H1 (cell line): ENCODE measurements at regions of chr5 and their contacts with region 1.

Region 1: GRCh38 chr5:15821506-15821905 is 321.5 kb downstream of the FBXL7 start:
- DNase-seq: no peak
- H3K4me3 ChIP-seq: no peak overlapping the region
- H3K27ac ChIP-seq: no peak overlapping the region
- H3K4me1 ChIP-seq: no peaks in the 10 kb centered on the region
- H3K27me3 ChIP-seq: no peaks in the 10 kb centered on the region
- CTCF ChIP-seq: no peak
- EP300 ChIP-seq: no peak
- POLR2A ChIP-seq: no peak
- RAD21 ChIP-seq: no peak

Region 2: GRCh38 chr5:15406478-15406877 is 415.0 kb before region 1 on chr5:
- CTCF ChIA-PET with region 1: no interaction called
- POLR2A ChIA-PET with region 1: no interaction called
- DNase-seq: no peak
- H3K4me3 ChIP-seq: no peak overlapping the region
- H3K27ac ChIP-seq: no peak overlapping the region
- H3K4me1 ChIP-seq: no peaks in the 10 kb centered on the region
- H3K27me3 ChIP-seq: no peaks in the 10 kb centered on the region
- CTCF ChIP-seq: no peak
- EP300 ChIP-seq: no peak
- POLR2A ChIP-seq: no peak
- RAD21 ChIP-seq: no peak

Region 3: DNA sequence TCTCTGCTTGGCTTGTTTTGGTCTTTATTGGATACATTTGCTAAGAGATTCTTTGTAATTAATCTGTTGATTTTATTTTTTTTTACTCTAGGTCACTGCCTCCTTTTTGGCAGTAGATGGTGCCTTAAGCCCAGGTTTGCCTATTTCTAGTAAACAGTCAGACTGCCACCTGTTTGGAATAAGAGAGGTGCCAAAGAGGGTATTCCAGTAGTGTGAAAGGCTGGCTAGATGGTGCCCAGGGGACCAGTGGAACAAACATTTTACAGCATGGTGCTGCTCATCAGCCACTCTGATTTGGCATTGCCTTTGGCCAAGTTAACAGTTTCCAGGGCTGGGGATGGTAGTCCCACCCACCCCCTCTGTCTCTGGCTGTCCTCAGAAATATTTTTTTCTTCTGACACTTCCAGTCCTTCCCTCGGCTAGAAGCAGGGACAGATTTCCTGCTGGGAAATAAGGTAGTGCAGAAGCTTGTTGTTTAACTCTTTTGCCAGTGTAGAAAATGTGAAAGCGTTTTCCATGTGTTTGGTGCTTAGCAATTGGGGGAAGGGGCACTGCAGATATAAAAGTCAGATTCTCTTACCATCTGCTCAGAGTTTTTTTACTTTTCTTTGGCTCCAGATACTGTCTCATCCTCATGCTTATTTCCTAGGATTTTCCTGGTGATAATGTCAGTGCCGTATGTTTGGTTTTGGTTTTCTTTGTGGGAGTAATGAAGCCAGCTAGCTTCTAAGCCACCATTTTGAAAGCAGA is 358.1 kb before region 1 on chr5:
- CTCF ChIA-PET with region 1: interaction called, 14 read pairs
- POLR2A ChIA-PET with region 1: no interaction called
- DNase-seq: peak in 1 of 2 experiments; percentile 52
- H3K4me3 ChIP-seq: no peak overlapping the region
- H3K27ac ChIP-seq: no peak overlapping the region
- H3K4me1 ChIP-seq: no peaks in the 10 kb centered on the region; a peak in 1 of 7 replicates
- H3K27me3 ChIP-seq: no peaks in the 10 kb centered on the region
- CTCF ChIP-seq: peak in 2 of 3 experiments; percentile 61 to 80; a peak in 3 of 4 replicates
- EP300 ChIP-seq: no peak
- POLR2A ChIP-seq: no peak
- RAD21 ChIP-seq: peak; percentile 96 to 97

Region 4: GRCh38 chr5:15472116-15472515 is 349.4 kb before region 1 on chr5:
- CTCF ChIA-PET with region 1: interaction called, 41 read pairs
- POLR2A ChIA-PET with region 1: no interaction called
- DNase-seq: peak in 1 of 2 experiments; percentile 61
- H3K4me3 ChIP-seq: no peak overlapping the region
- H3K27ac ChIP-seq: no peak overlapping the region
- H3K4me1 ChIP-seq: no peaks in the 10 kb centered on the region
- H3K27me3 ChIP-seq: no peaks in the 10 kb centered on the region
- CTCF ChIP-seq: peak; percentile 22 to 51 (median 44)
- EP300 ChIP-seq: no peak
- POLR2A ChIP-seq: no peak
- RAD21 ChIP-seq: peak; percentile 48 to 63

Region 5: GRCh38 chr5:15598294-15598902 is 223.1 kb before region 1 on chr5:
- CTCF ChIA-PET with region 1: interaction called, 10 read pairs
- POLR2A ChIA-PET with region 1: no interaction called
- DNase-seq: peak in 1 of 2 experiments; percentile 75
- H3K4me3 ChIP-seq: no peak overlapping the region
- H3K27ac ChIP-seq: no peak overlapping the region
- H3K4me1 ChIP-seq: peaks cover 1 to 13% (median 10%) of the 10 kb centered on the region in 4 experiments; a peak in 4 of 7 replicates
- H3K27me3 ChIP-seq: no peaks in the 10 kb centered on the region
- CTCF ChIP-seq: peak; percentile 18 to 73 (median 52); a peak in 3 of 4 replicates
- EP300 ChIP-seq: no peak
- POLR2A ChIP-seq: no peak
- RAD21 ChIP-seq: peak; percentile 51 to 61

Region 6: DNA sequence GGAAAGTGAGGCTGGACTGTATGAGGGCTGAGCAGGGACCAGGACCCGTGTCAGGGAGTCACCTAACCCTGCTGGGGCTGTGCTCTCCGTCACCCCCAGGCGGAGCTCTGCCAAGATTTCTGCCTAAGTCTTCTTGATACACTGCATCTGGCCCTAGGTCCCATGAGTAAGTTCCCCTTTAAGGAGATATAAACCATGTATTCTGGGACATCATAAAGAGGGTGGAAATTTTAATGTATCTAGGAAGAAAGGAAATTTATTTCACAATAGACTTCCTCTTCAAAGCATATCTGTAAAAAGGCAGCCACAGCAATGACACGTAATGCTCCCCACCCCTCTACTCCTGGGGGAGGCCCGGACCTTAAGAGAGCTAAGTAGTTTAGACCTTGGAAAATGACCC is 138.2 kb before region 1 on chr5:
- CTCF ChIA-PET with region 1: interaction called, 32 read pairs
- POLR2A ChIA-PET with region 1: no interaction called
- DNase-seq: peak; percentile 39 to 76
- H3K4me3 ChIP-seq: no peak overlapping the region
- H3K27ac ChIP-seq: no peak overlapping the region
- H3K4me1 ChIP-seq: peaks cover 0 to 5% (median 2%) of the 10 kb centered on the region in 4 experiments; a peak in 3 of 7 replicates
- H3K27me3 ChIP-seq: no peaks in the 10 kb centered on the region
- CTCF ChIP-seq: peak; percentile 78 to 88 (median 82)
- EP300 ChIP-seq: no peak
- POLR2A ChIP-seq: no peak
- RAD21 ChIP-seq: peak; percentile 59 to 79

Region 7: DNA sequence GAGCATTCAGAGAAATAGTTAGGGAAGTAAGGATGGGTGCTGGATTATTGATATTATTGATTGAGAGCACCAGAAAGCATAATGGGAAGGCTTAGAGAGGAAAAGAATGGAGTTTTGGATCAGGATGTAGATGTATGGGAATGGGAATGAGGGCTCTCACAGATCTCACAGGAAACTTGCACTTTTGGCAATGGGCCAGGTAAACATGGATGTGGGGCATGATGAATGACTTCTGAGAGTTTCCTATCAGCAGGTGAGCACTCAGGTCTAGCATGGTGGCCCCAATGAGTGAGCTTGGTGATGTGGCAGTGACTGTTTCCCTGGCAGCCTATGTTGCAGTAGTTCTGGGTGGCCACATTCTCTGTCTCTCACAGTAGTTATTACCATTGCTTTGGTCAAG is 37.8 kb before region 1 on chr5:
- CTCF ChIA-PET with region 1: no interaction called
- POLR2A ChIA-PET with region 1: no interaction called
- DNase-seq: no peak
- H3K4me3 ChIP-seq: no peak overlapping the region
- H3K27ac ChIP-seq: no peak overlapping the region
- H3K4me1 ChIP-seq: no peaks in the 10 kb centered on the region
- H3K27me3 ChIP-seq: no peaks in the 10 kb centered on the region
- CTCF ChIP-seq: no peak
- EP300 ChIP-seq: no peak
- POLR2A ChIP-seq: no peak
- RAD21 ChIP-seq: no peak

Region 8: DNA sequence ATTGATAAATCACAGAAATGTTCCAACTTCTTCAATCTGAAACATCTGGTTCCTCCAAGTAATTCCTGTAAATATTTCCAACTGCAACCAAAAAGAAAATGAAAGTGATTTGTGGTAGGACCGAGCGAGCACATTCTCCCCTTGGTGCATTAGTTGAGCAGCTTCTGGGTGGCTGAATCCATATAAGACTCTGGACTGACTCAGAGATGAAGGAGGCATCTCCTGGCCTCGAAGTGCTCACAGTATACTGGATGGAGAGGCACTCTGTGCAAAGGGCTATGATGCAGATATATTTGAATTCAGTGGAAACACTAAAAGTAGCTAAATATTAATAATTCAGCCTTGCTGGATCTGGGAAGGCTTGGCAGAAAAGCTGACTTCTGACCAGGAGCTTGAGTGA is 93.1 kb after region 1 on chr5:
- CTCF ChIA-PET with region 1: no interaction called
- POLR2A ChIA-PET with region 1: no interaction called
- DNase-seq: no peak
- H3K4me3 ChIP-seq: no peak overlapping the region
- H3K27ac ChIP-seq: no peak overlapping the region
- H3K4me1 ChIP-seq: peaks cover 1 to 9% (median 5%) of the 10 kb centered on the region in 4 experiments; a peak in 4 of 7 replicates
- H3K27me3 ChIP-seq: no peaks in the 10 kb centered on the region
- CTCF ChIP-seq: no peak
- EP300 ChIP-seq: no peak
- POLR2A ChIP-seq: no peak
- RAD21 ChIP-seq: no peak

Region 9: GRCh38 chr5:15995341-15996052 is 174.0 kb after region 1 on chr5:
- CTCF ChIA-PET with region 1: interaction called, 13 read pairs
- POLR2A ChIA-PET with region 1: no interaction called
- DNase-seq: peak in 1 of 2 experiments; percentile 48
- H3K4me3 ChIP-seq: no peak overlapping the region
- H3K27ac ChIP-seq: no peak overlapping the region
- H3K4me1 ChIP-seq: no peaks in the 10 kb centered on the region; a peak in 1 of 7 replicates
- H3K27me3 ChIP-seq: peaks cover 0 to 1% (median 0%) of the 10 kb centered on the region in 4 experiments; a peak in 1 of 7 replicates
- CTCF ChIP-seq: peak in 2 of 3 experiments; percentile 38 to 53; a peak in 3 of 4 replicates
- EP300 ChIP-seq: no peak
- POLR2A ChIP-seq: no peak
- RAD21 ChIP-seq: peak; percentile 78 to 80